K562 (cell line): ENCODE measurements at regions of chr7 and their contacts with region 1.

Region 1: GRCh38 chr7:111223802-111224253 is 132.9 kb downstream of the LRRN3 start:
- DNase-seq: peak; percentile 50 to 82 (median 59)
- ATAC-seq: peak; percentile 93
- H3K4me3 ChIP-seq: no peak overlapping the region
- H3K27ac ChIP-seq: peak overlapping the region; percentile 51
- H3K4me1 ChIP-seq: peaks cover 4 to 31% of the 10 kb centered on the region in 2 experiments; a peak in 4 of 5 replicates
- H3K27me3 ChIP-seq: no peaks in the 10 kb centered on the region
- CTCF ChIP-seq: no peak
- EP300 ChIP-seq: peak; percentile 88
- POLR2A ChIP-seq: no peak
- RAD21 ChIP-seq: no peak

Region 2: GRCh38 chr7:110922906-110923305 is 300.9 kb before region 1 on chr7:
- CTCF ChIA-PET with region 1: no interaction called
- POLR2A ChIA-PET with region 1: no interaction called
- in situ Hi-C with region 1: no loop called
- intact Hi-C with region 1: no loop called
- DNase-seq: no peak
- ATAC-seq: no peak
- H3K4me3 ChIP-seq: no peak overlapping the region
- H3K27ac ChIP-seq: no peak overlapping the region
- H3K4me1 ChIP-seq: no peaks in the 10 kb centered on the region
- H3K27me3 ChIP-seq: no peaks in the 10 kb centered on the region
- CTCF ChIP-seq: no peak
- EP300 ChIP-seq: no peak
- POLR2A ChIP-seq: no peak
- RAD21 ChIP-seq: no peak

Region 3: GRCh38 chr7:111043533-111043932 is 180.3 kb before region 1 on chr7:
- CTCF ChIA-PET with region 1: no interaction called
- POLR2A ChIA-PET with region 1: no interaction called
- in situ Hi-C with region 1: no loop called
- intact Hi-C with region 1: no loop called
- DNase-seq: no peak
- ATAC-seq: no peak
- H3K4me3 ChIP-seq: no peak overlapping the region
- H3K27ac ChIP-seq: no peak overlapping the region
- H3K4me1 ChIP-seq: no peaks in the 10 kb centered on the region
- H3K27me3 ChIP-seq: no peaks in the 10 kb centered on the region
- CTCF ChIP-seq: no peak
- EP300 ChIP-seq: no peak
- POLR2A ChIP-seq: no peak
- RAD21 ChIP-seq: no peak

Region 4: GRCh38 chr7:111089822-111090426 is 133.9 kb before region 1 on chr7:
- CTCF ChIA-PET with region 1: no interaction called
- POLR2A ChIA-PET with region 1: no interaction called
- in situ Hi-C with region 1: no loop called
- intact Hi-C with region 1: no loop called
- DNase-seq: peak; percentile 66 to 72 (median 69)
- ATAC-seq: peak; percentile 83
- H3K4me3 ChIP-seq: no peak overlapping the region
- H3K27ac ChIP-seq: no peak overlapping the region
- H3K4me1 ChIP-seq: no peaks in the 10 kb centered on the region; a peak in 1 of 5 replicates
- H3K27me3 ChIP-seq: no peaks in the 10 kb centered on the region
- CTCF ChIP-seq: peak; percentile 54 to 80 (median 62)
- EP300 ChIP-seq: no peak
- POLR2A ChIP-seq: no peak
- RAD21 ChIP-seq: peak; percentile 67 to 77

Region 5: DNA sequence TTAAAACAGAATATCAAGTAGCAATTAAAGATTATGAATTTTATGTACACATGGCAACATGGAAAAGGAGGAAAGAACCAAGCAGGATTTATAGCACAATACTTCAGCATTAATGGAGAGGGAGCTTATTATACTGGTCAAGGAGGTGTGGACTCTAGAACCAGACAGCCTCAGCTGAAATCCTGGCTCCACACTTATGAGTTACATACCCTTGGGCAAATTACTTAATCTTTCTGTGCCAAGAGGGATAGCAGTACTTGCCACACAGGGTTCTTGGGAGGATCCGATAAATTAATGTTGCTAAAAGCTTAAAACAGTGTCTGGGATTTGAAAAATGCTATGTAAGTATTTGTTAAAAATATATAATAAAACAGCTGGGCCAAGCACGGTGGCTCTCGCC is 74.3 kb after region 1 on chr7:
- CTCF ChIA-PET with region 1: no interaction called
- POLR2A ChIA-PET with region 1: no interaction called
- in situ Hi-C with region 1: no loop called
- intact Hi-C with region 1: no loop called
- DNase-seq: no peak
- ATAC-seq: no peak
- H3K4me3 ChIP-seq: no peak overlapping the region
- H3K27ac ChIP-seq: no peak overlapping the region
- H3K4me1 ChIP-seq: peaks cover 0 to 4% of the 10 kb centered on the region in 2 experiments; a peak in 3 of 5 replicates
- H3K27me3 ChIP-seq: no peaks in the 10 kb centered on the region
- CTCF ChIP-seq: no peak
- EP300 ChIP-seq: no peak
- POLR2A ChIP-seq: no peak
- RAD21 ChIP-seq: no peak

Region 6: GRCh38 chr7:111312964-111313363 is 89.1 kb after region 1 on chr7:
- CTCF ChIA-PET with region 1: no interaction called
- POLR2A ChIA-PET with region 1: no interaction called
- in situ Hi-C with region 1: loop called (anchors 5 kb)
- intact Hi-C with region 1: loop called (anchors 5 kb)
- DNase-seq: peak in 1 of 4 experiments; percentile 23
- ATAC-seq: peak; percentile 82
- H3K4me3 ChIP-seq: no peak overlapping the region
- H3K27ac ChIP-seq: no peak overlapping the region
- H3K4me1 ChIP-seq: peaks cover 0 to 9% of the 10 kb centered on the region in 2 experiments; a peak in 2 of 5 replicates
- H3K27me3 ChIP-seq: no peaks in the 10 kb centered on the region
- CTCF ChIP-seq: peak in 2 of 3 experiments; percentile 14 to 25; a peak in 2 of 6 replicates
- EP300 ChIP-seq: no peak
- POLR2A ChIP-seq: no peak
- RAD21 ChIP-seq: no peak; a peak in 1 of 4 replicates

Region 7: GRCh38 chr7:111561885-111562732 is 338.3 kb after region 1 on chr7 and contains the start of gene IMMP2L:
- CTCF ChIA-PET with region 1: no interaction called
- POLR2A ChIA-PET with region 1: no interaction called
- in situ Hi-C with region 1: no loop called
- intact Hi-C with region 1: loop called (anchors 5 kb)
- DNase-seq: peak; percentile 98 to 100 (median 100)
- ATAC-seq: peak; percentile 96
- H3K4me3 ChIP-seq: peak within 1 kb of the TSS; percentile 67
- H3K27ac ChIP-seq: peak within 1 kb of the TSS; percentile 85
- H3K4me1 ChIP-seq: peaks cover 6 to 19% of the 10 kb centered on the region in 2 experiments; a peak in 4 of 5 replicates
- H3K27me3 ChIP-seq: no peaks in the 10 kb centered on the region; a peak in 1 of 5 replicates
- CTCF ChIP-seq: peak; percentile 81 to 87 (median 84)
- EP300 ChIP-seq: peak; percentile 62
- POLR2A ChIP-seq: peak; percentile 84
- RAD21 ChIP-seq: peak; percentile 79 to 80
- polyA plus RNA-seq, gene IMMP2L: 112 to 116 TPM